ENCODE measurements at regions of chr3 and their contacts with region 1.

Region 1: GRCh38 chr3:157159762-157160657 is at the start of gene CCNL1:
- DNase-seq: peak; percentile 99
- H3K4me3 ChIP-seq: peak within 1 kb of the TSS; percentile 89 to 98 (median 98)
- H3K27ac ChIP-seq: peak within 1 kb of the TSS; percentile 99 to 100 (median 100)
- H3K4me1 ChIP-seq: peaks cover 45 to 53% (median 51%) of the 10 kb centered on the region in 4 donors
- H3K27me3 ChIP-seq: no peaks in the 10 kb centered on the region
- CTCF ChIP-seq: peak in 1 of 3 experiments; percentile 18
- EP300 ChIP-seq: peak; percentile 82
- POLR2A ChIP-seq: peak; percentile 99
- total RNA-seq, gene CCNL1: 45.3 to 180 (median 77.3) TPM

Region 2: GRCh38 chr3:156373095-156373494 is 786.9 kb before region 1 on chr3:
- intact Hi-C with region 1: no loop called
- DNase-seq: no peak
- H3K4me3 ChIP-seq: no peak overlapping the region
- H3K27ac ChIP-seq: no peak overlapping the region
- H3K4me1 ChIP-seq: peaks cover 0 to 35% (median 25%) of the 10 kb centered on the region in 4 donors
- H3K27me3 ChIP-seq: no peaks in the 10 kb centered on the region
- CTCF ChIP-seq: no peak
- EP300 ChIP-seq: no peak
- POLR2A ChIP-seq: no peak

Region 3: GRCh38 chr3:157174649-157175498 is 14.9 kb after region 1 on chr3:
- intact Hi-C with region 1: loop called (anchors 1 kb)
- DNase-seq: peak; percentile 100
- H3K4me3 ChIP-seq: peak overlapping the region; percentile 62 to 66 (median 64)
- H3K27ac ChIP-seq: peak overlapping the region; percentile 94 to 98 (median 98)
- H3K4me1 ChIP-seq: peaks cover 16 to 26% (median 22%) of the 10 kb centered on the region in 4 donors
- H3K27me3 ChIP-seq: no peaks in the 10 kb centered on the region
- CTCF ChIP-seq: no peak
- EP300 ChIP-seq: peak; percentile 96
- POLR2A ChIP-seq: peak; percentile 94

Measured in esophagus muscularis mucosa (tissue), 4 donors.